ENCODE measurements at regions of chr10 and their contacts with region 1.

Region 1: DNA sequence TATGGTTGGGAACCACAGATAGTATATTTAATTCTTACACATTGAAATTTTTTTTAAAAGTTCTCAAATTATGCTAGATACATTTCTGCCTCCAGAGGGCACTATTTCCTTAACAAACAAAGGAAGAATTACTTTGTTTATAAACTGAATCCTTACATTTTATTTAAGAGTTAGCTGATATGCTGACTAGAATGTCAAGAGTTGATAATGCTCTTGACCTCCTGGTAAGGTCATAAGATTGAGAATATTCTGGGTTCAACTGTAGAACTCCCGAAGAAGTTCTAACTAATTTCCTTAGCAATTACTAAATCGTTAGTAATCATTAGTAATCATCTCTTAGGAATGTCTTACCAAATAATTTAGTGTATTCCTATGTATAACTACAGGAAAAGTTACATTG is 95.3 kb upstream of the CYP26C1 start:
- DNase-seq: peak; percentile 68
- ATAC-seq: 0 out of 2 replicates have a peak, but pooled peaks have one; percentile 27
- H3K4me3 ChIP-seq: peak overlapping the region; percentile 31; the same call in 1 of the 2 replicates
- H3K27ac ChIP-seq: no peak overlapping the region
- H3K4me1 ChIP-seq: peaks cover 11% of the 10 kb centered on the region
- H3K27me3 ChIP-seq: no peaks in the 10 kb centered on the region
- CTCF ChIP-seq: peak; percentile 77

Region 2: DNA sequence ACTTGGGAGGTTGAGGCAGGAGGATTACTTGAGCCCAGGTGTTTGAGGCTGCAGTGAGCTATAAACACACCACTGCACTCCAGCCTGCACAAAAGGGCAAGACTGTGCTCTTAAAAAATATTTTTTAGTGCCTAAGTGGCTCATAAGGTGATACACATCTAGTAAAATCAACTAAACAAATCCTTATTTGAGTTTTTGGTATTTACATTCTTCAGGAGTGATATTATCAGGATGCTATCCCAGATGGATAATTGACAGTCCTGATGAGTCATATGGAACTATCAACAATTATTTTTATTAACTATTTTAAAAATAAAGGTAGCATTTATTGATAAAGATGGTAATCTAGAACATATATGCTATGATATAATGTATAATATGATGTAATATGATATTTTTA is 23.0 kb before region 1 on chr10:
- CTCF ChIA-PET with region 1: no interaction called
- POLR2A ChIA-PET with region 1: no interaction called
- intact Hi-C with region 1: no loop called
- DNase-seq: peak; percentile 32
- ATAC-seq: peak; percentile 77
- H3K4me3 ChIP-seq: no peak overlapping the region
- H3K27ac ChIP-seq: no peak overlapping the region
- H3K4me1 ChIP-seq: no peaks in the 10 kb centered on the region
- H3K27me3 ChIP-seq: no peaks in the 10 kb centered on the region
- CTCF ChIP-seq: no peak

Region 3: GRCh38 chr10:93039721-93040120 is 74.4 kb after region 1 on chr10:
- CTCF ChIA-PET with region 1: no interaction called
- POLR2A ChIA-PET with region 1: no interaction called
- intact Hi-C with region 1: loop called (anchors 2 kb)
- DNase-seq: peak; percentile 59
- ATAC-seq: peak; percentile 80
- H3K4me3 ChIP-seq: no peak overlapping the region
- H3K27ac ChIP-seq: no peak overlapping the region
- H3K4me1 ChIP-seq: no peaks in the 10 kb centered on the region
- H3K27me3 ChIP-seq: no peaks in the 10 kb centered on the region
- CTCF ChIP-seq: peak; percentile 64

Measured in PC-3 (cell line).